ENCODE measurements at regions of chr6 and their contacts with region 1.

Region 1: DNA sequence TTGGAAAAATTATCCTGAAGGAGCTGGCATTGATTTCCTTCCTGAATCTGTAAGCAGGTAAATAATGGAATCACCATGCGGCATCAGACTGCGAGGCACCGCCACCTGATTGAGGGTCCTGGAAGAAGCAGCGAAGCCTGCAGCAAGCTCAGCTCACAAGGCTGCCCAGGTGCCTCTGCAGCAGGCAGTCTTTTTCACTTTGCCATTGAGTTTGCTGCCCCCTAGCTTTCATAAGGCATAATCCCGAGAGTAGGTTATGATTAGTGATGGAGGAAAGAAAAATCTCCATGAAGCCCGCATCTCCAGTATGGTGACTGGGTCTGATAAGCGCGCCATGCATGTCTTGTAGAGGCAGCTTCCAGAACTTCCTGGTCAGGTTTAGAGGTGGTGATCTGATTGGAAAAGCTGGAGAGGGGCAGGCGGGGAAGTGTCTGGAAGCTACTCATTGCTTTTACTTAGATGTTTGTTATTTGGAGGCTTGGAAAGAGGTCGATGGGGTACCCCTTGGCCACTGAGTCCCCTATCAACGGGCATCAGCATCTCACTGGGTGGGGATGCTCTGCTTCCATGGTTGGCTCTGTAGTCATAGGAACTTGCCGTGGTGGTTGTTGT is 26.7 kb downstream of the IYD start:
- DNase-seq: peak; percentile 50
- ATAC-seq: peak; percentile 71
- H3K4me3 Mint-ChIP-seq: no peak overlapping the region
- H3K27ac Mint-ChIP-seq: no peak overlapping the region
- H3K4me1 Mint-ChIP-seq: no peaks in the 10 kb centered on the region
- H3K27me3 Mint-ChIP-seq: peaks cover 32% of the 10 kb centered on the region

Region 2: DNA sequence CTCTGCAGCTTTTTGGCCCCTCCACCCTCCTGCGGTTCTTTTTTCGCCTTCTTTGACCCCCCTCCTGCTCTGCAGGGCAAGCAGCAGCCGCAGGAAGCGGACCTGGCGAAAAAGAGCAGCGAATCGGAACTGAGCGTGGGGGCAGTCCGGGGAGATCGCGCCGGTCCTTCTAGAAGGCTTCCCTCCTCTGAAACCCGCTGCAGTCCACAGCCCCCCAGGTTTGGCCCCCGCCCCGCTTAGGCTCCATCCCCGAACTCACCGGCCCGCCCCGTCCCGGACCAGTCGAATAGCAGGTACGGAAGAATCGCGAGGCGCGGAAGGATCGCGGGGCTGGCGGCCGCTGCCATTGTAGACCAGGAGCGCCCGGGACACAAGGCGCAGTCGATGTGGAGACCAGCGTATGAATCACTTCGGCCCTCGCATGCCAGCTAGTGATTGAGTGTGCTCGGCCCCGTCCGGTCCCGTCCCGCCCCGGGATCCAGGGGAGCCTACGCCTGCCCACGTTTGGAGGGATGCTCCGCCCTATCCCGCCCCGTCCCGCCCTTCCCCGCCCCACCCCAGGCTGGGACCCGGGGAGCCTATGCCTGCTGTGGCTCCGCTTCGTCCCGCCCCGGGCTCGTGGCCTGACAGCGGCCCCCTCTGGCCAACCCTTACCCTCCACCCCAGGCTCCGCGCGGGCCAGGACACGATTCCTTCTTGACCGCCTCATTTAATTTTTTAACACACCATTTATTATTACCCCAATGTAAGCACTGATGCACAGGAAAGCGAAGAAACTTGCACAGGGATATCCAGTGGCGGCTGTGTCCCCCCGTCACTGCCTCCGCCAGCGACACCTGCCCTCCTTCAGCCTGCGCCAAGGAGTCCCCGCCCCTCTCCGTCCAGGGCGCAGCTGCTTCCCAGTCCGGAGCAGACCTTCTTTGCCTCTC is 326.5 kb before region 1 on chr6 and contains the start of gene ULBP3:
- CTCF ChIA-PET with region 1: interaction called, 26 read pairs
- DNase-seq: peak; percentile 85
- ATAC-seq: peak; percentile 87
- H3K4me3 Mint-ChIP-seq: peak within 1 kb of the TSS; percentile 69
- H3K27ac Mint-ChIP-seq: peak within 1 kb of the TSS; percentile 26
- H3K4me1 Mint-ChIP-seq: peaks cover 31% of the 10 kb centered on the region
- H3K27me3 Mint-ChIP-seq: peaks cover 21% of the 10 kb centered on the region
- total RNA-seq, gene ULBP3: 1.4 to 2.1 TPM

Region 3: GRCh38 chr6:150382171-150382570 is 13.3 kb before region 1 on chr6:
- CTCF ChIA-PET with region 1: interaction called, 15 read pairs
- DNase-seq: no peak
- ATAC-seq: no peak
- H3K4me3 Mint-ChIP-seq: no peak overlapping the region
- H3K27ac Mint-ChIP-seq: no peak overlapping the region
- H3K4me1 Mint-ChIP-seq: peaks cover 2% of the 10 kb centered on the region
- H3K27me3 Mint-ChIP-seq: peaks cover 43% of the 10 kb centered on the region

Region 4: GRCh38 chr6:150452428-150453243 is 57.1 kb after region 1 on chr6:
- CTCF ChIA-PET with region 1: no interaction called
- DNase-seq: no peak
- ATAC-seq: no peak
- H3K4me3 Mint-ChIP-seq: no peak overlapping the region
- H3K27ac Mint-ChIP-seq: no peak overlapping the region
- H3K4me1 Mint-ChIP-seq: no peaks in the 10 kb centered on the region
- H3K27me3 Mint-ChIP-seq: peaks cover 5% of the 10 kb centered on the region

Region 5: DNA sequence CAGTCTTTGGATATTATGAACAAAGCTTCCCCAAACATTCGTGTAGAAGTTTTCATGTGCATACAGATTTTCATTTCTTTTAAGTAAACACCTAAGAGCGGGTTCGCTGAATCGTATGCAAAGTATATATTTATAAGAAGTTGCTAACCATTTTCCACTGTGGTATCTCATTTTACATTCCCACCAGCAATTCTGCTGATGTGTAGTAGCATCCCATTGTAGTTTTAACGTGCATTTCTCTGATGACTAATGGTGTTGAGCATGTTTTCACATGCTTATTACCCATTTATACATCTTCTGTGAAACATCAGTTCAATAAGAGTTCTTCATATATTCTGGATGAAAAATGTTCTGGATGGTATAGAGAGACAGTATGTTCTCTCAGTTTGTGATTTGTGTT is 70.7 kb after region 1 on chr6:
- CTCF ChIA-PET with region 1: no interaction called
- DNase-seq: no peak
- ATAC-seq: no peak
- H3K4me3 Mint-ChIP-seq: no peak overlapping the region
- H3K27ac Mint-ChIP-seq: no peak overlapping the region
- H3K4me1 Mint-ChIP-seq: no peaks in the 10 kb centered on the region
- H3K27me3 Mint-ChIP-seq: peaks cover under 1% of the 10 kb centered on the region

Measured in activated CD8-positive, alpha-beta memory T cell treated with anti-CD3 and anti-CD28 coated beads, Interleukin-2, amount 10 ng/mL, durations not matched to agents 7 days and 5 days (primary cell).